ENCODE measurements at regions of chr3 and their contacts with region 1.

Region 1: GRCh38 chr3:132535575-132536441 is 61.3 kb upstream of the ACKR4 start:
- DNase-seq: peak in 2 of 3 donors; percentile 62 to 69
- ATAC-seq: peak; percentile 88 to 90
- H3K4me3 ChIP-seq: no peak overlapping the region
- H3K27ac ChIP-seq: no peak overlapping the region
- H3K4me1 ChIP-seq: peaks cover 3% of the 10 kb centered on the region
- H3K27me3 ChIP-seq: no peaks in the 10 kb centered on the region

Region 2: DNA sequence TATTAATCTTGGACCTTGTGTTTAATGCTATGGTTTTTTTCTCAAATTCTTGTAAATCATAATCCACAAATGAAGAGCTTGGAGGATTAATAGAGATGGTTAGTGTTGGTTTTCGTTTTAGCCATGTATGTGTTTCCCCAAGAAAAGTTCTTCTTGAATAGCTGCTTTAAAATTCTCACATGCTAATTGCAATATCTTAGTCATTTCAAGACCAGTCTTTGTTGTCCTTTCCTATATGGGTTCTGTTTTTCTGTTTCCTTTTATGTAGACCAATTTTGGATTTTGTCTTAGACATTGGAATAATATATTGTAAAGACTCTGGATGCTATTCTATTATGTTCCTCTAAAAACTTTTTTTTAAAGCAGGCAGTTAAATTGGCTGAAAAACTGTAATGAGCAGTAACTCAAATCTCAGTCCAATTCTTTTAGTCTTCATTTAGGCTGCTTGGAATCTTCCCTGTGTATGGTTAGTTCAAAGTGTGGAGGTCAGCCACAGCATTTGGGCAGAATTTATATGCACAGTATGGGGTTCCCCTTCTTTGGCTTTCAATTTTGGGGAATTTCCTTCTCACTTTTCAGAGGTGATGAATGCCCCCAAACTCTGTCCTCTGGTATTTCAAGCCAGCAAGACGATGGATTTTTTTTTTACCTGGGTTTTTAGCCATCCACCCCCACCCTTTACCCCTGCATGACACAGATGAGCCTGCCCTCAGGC is 157.6 kb before region 1 on chr3:
- intact Hi-C with region 1: no loop called
- DNase-seq: no peak
- ATAC-seq: no peak
- H3K4me3 ChIP-seq: no peak overlapping the region
- H3K27ac ChIP-seq: no peak overlapping the region
- H3K4me1 ChIP-seq: no peaks in the 10 kb centered on the region
- H3K27me3 ChIP-seq: no peaks in the 10 kb centered on the region

Region 3: GRCh38 chr3:132595014-132595413 is 59.2 kb after region 1 on chr3:
- intact Hi-C with region 1: no loop called
- DNase-seq: no peak
- ATAC-seq: peak in 1 of 2 donors; percentile 25
- H3K4me3 ChIP-seq: no peak overlapping the region
- H3K27ac ChIP-seq: no peak overlapping the region
- H3K4me1 ChIP-seq: no peaks in the 10 kb centered on the region
- H3K27me3 ChIP-seq: no peaks in the 10 kb centered on the region

Region 4: DNA sequence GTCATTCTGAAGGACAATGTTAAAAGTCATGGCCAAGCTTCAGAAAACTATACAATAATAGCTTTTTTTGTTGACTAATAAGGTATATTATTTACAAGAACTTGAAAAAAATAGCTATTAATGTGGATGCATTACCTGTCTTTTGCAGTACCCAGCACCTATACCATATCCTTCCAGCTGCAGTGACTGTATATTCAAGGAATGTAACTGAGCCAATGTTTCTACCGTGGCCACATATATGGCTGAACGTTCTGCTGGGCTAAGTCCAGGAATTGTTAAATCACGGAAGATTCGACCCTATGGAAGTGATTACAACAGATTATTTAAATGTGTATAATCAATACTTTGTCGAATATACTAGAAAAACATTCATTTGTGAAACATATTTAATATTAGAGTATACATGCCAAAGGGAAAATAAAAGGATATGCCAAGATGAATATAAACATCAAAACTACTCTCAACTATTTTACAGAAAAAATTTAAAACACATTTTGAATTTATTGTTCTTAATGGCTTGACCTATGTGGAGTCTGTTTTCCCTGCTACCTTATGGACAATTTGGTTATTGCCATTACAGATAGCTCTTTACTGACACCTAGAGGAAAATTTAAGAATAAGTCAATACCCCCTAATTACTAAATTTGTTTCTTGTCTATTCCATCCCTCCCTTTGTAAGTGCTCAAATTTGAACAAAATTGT is 106.2 kb after region 1 on chr3:
- intact Hi-C with region 1: loop called (anchors 2 to 5 kb)
- DNase-seq: no peak
- ATAC-seq: peak; percentile 54 to 69
- H3K4me3 ChIP-seq: no peak overlapping the region
- H3K27ac ChIP-seq: no peak overlapping the region
- H3K4me1 ChIP-seq: peaks cover 2% of the 10 kb centered on the region
- H3K27me3 ChIP-seq: no peaks in the 10 kb centered on the region

Region 5: DNA sequence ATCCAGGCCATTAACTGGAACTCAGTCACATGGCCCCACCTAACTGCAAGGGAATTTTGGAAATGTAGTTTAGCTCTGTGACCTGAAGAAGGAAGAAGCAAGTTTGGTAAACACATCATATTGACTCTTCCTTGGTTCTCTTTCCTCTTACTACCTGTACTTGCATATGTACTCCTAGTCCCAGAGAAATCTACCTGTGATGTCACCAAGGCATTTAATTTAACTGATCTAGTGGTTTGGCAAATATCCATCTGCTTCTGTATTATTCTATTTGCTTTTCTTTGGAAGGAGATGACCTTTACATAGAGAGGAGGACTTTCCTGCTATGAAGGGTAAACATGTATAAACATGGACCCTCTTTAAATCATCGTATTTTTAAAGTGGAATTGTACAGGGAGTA is 653.2 kb after region 1 on chr3:
- intact Hi-C with region 1: no loop called
- DNase-seq: peak in 1 of 3 donors; percentile 13
- ATAC-seq: no peak
- H3K4me3 ChIP-seq: no peak overlapping the region
- H3K27ac ChIP-seq: no peak overlapping the region
- H3K4me1 ChIP-seq: peaks cover 9% of the 10 kb centered on the region
- H3K27me3 ChIP-seq: no peaks in the 10 kb centered on the region

Measured in right cardiac atrium (tissue), 5 donors.